ENCODE measurements at regions of chr1 and their contacts with region 1.

Region 1: DNA sequence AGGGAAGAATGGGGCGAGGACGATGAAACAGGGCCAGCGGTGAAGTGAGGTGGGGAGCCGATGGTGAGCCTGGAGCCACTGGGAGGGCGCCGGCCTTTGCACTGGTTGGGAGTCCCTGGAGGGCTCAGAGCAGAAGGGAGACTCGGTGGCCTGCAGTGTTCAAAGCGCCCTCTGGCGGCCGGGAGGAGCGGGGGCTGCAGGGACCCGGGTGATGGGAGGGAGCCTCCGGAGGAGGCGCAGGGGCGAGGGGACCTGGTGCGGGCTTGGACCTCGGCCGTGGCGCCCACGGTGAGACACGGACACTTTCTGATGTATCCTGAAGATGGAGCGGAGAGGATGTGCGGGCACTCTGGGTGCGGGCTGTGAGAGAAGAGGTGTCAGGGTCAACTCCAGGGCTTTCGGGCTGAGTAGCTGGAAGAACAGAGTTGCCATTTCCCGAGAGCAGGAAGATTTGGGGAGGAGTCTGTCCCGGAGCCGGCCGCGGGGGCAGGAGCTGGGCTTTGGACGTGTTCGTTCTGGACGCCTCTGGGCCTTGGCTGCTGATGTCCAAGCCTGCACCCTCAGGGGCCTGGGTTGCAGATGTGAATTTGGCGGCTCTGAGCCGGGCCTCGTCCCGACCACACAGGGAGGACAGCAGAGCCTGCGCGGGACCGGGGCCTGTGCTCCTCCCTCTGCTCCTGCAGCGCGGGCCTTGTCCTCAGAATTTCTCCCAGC is 29.7 kb downstream of the HEYL start:
- DNase-seq: peak; percentile 68
- H3K4me3 Mint-ChIP-seq: no peak overlapping the region
- H3K27ac Mint-ChIP-seq: no peak overlapping the region
- H3K4me1 Mint-ChIP-seq: no peaks in the 10 kb centered on the region
- H3K27me3 Mint-ChIP-seq: peaks cover 9% of the 10 kb centered on the region
- CTCF ChIP-seq: peak; percentile 37

Region 2: DNA sequence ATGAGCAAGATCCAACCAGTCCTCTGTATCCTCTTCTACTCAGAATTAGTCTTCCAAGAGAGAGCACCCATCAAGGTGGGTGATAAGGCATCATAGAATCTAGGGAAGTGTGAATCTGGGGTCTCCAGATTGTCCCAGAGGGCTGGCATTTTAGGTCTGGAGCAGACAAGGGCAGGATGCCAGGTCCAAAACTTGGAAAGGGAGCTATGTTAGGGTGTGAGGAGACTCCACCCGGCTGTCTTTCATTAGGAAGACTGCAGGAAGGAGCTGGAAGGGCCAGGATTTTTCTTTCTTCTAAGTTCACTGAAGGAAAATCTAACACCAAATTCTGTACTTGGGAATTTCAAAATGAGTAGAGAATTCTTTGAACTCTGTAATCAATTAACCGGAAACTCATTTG is 204.4 kb before region 1 on chr1:
- CTCF ChIA-PET with region 1: no interaction called
- intact Hi-C with region 1: no loop called
- DNase-seq: no peak
- H3K4me3 Mint-ChIP-seq: peak overlapping the region; percentile 33
- H3K27ac Mint-ChIP-seq: peak overlapping the region; percentile 93
- H3K4me1 Mint-ChIP-seq: peaks cover 58% of the 10 kb centered on the region
- H3K27me3 Mint-ChIP-seq: no peaks in the 10 kb centered on the region
- CTCF ChIP-seq: no peak

Region 3: DNA sequence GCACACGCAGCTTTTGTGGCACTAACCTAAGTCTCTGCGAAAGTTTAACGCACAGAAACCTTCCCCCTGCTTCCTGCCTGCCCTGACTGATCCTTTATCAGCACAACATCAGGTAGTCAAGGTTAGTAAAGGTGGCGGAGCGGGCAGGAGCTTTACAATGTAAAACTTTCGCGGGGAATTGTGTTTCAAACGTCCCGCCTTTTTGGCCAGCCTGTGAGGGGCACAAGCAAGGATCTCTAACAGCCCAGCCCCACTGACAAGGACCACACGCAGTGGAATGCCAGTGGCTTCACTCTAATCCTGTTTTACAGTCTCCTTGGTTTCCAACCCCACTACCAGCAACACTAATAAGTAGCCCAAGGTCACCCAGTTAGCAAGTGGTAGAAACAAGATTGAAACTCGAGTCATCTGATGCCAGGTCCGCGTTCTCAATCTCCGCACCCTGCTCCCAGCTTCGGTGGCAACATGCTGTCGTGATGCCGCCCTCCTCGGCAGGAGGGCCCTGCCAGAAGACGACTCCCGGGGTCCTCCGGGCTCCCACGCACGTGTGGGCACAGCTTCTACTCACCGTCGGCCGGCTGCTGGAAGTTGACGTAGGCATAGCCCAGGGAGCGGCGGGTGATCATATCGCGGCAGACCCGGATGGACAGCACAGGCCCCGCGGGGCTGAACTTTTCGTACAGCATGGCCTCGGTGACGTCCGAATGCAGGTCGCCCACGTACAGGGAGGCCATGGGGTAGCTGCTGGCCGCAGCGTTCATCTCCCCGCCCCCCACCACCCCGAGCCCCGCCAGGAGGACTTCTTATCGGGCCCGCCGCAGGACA is 34.4 kb before region 1 on chr1:
- CTCF ChIA-PET with region 1: interaction called, 14 read pairs
- intact Hi-C with region 1: no loop called
- DNase-seq: peak; percentile 34
- H3K4me3 Mint-ChIP-seq: peak overlapping the region; percentile 86
- H3K27ac Mint-ChIP-seq: peak overlapping the region; percentile 65
- H3K4me1 Mint-ChIP-seq: peaks cover 22% of the 10 kb centered on the region
- H3K27me3 Mint-ChIP-seq: no peaks in the 10 kb centered on the region
- CTCF ChIP-seq: no peak

Region 4: GRCh38 chr1:39653546-39654031 is 43.8 kb after region 1 on chr1:
- CTCF ChIA-PET with region 1: interaction called, 38 read pairs
- intact Hi-C with region 1: loop called (anchors 1 kb)
- DNase-seq: peak; percentile 70
- H3K4me3 Mint-ChIP-seq: no peak overlapping the region
- H3K27ac Mint-ChIP-seq: no peak overlapping the region
- H3K4me1 Mint-ChIP-seq: no peaks in the 10 kb centered on the region
- H3K27me3 Mint-ChIP-seq: peaks cover 58% of the 10 kb centered on the region
- CTCF ChIP-seq: peak; percentile 90

Region 5: GRCh38 chr1:39720094-39720999 is 110.6 kb after region 1 on chr1:
- CTCF ChIA-PET with region 1: interaction called, 14 read pairs
- intact Hi-C with region 1: loop called (anchors 1 kb)
- DNase-seq: no peak
- H3K4me3 Mint-ChIP-seq: no peak overlapping the region
- H3K27ac Mint-ChIP-seq: no peak overlapping the region
- H3K4me1 Mint-ChIP-seq: no peaks in the 10 kb centered on the region
- H3K27me3 Mint-ChIP-seq: peaks cover 65% of the 10 kb centered on the region
- CTCF ChIP-seq: no peak

Region 6: DNA sequence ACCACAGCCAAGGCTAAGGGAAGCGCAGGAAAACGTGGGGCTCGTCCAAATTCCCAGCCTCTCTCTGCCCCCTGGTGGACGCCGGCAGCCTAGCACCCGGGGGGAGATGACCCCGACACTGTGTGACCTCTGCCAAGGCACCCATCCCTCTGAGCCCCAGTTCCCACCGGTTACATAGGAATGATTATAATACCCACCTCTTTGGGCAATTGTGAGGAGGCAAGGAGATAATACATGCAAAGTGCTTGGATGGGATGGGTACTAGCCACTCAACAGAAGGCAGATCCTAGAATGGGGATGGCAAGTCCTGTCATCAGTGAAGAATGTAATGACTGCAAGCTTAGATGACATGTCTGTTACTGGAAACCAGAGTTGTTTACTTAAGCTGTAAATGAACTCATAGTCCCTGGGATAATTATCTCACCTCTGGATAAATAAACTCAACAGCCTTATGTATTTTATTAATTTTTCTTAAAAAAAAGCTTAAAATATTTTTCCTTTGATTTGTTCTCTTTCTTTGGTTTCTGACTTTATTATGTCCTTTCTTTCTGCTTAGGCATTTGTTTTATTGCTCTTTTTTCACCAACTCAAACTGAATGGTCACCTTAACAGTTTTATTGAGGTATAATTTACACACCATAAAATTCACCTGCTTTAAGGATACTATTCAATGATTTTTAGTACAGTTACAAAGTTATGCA is 190.1 kb after region 1 on chr1:
- CTCF ChIA-PET with region 1: interaction called, 4 read pairs
- intact Hi-C with region 1: loop called (anchors 10 kb)
- DNase-seq: peak; percentile 82
- H3K4me3 Mint-ChIP-seq: peak overlapping the region; percentile 26
- H3K27ac Mint-ChIP-seq: peak overlapping the region; percentile 36
- H3K4me1 Mint-ChIP-seq: no peaks in the 10 kb centered on the region
- H3K27me3 Mint-ChIP-seq: no peaks in the 10 kb centered on the region
- CTCF ChIP-seq: peak; percentile 95